Activated CD4-positive, alpha-beta memory T cell treated with anti-CD3 and anti-CD28 coated beads for 36 hours (primary cell): ENCODE measurements at regions of chr19 and their contacts with region 1.

Region 1: GRCh38 chr19:19385108-19385899 is 20.2 kb upstream of the GATAD2A start:
- DNase-seq: peak; percentile 100
- H3K4me3 Mint-ChIP-seq: peak overlapping the region; percentile 80
- H3K27ac Mint-ChIP-seq: peak overlapping the region; percentile 85
- H3K4me1 Mint-ChIP-seq: peaks cover 35% of the 10 kb centered on the region
- H3K27me3 Mint-ChIP-seq: no peaks in the 10 kb centered on the region

Region 2: DNA sequence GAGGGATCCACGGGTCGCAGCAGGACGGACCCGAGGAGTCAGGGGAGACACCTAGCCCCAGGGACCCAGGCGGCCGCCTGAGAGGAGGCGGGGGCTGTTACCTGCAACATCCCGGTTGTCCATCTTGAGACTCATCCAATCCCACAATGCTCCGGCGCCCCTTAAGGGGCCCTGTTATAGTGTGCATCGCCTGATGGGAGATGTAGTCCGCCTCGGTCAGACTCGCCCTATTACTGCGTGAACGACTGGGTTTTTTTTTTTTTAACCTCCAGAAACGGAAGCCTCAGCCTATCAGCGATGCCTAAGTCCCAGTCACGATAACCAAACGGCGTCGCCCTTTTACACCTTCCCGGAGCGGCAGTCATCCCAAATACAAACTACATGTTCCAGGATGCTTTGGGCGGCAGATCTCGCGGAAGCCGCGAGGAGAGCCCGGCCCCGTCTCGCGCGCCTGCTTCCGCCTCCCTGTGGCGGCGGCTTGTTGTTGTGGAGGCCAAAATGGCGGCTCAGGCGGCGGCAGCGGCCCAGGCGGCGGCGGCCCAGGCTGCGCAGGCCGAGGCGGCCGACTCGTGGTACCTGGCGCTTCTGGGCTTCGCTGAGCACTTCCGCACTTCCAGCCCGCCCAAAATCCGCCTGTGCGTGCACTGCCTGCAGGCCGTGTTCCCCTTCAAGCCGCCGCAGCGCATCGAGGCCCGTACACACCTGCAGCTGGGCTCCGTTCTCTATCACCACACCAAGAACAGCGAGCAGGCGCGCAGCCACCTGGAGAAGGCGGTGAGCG is 64.8 kb before region 1 on chr19 and contains the starts of genes MAU2 and SUGP1:
- CTCF ChIA-PET with region 1: interaction called, 3 read pairs
- POLR2A ChIA-PET with region 1: interaction called, 3 read pairs
- intact Hi-C with region 1: loop called (anchors 1 kb)
- DNase-seq: peak; percentile 94
- H3K4me3 Mint-ChIP-seq: peak within 1 kb of the TSS; percentile 94
- H3K27ac Mint-ChIP-seq: peak within 1 kb of the TSS; percentile 96
- H3K4me1 Mint-ChIP-seq: peaks cover 35% of the 10 kb centered on the region
- H3K27me3 Mint-ChIP-seq: no peaks in the 10 kb centered on the region
- total RNA-seq, gene MAU2: 38.6 to 40.9 TPM
- total RNA-seq, gene SUGP1: 39.2 to 44.0 TPM

Region 3: DNA sequence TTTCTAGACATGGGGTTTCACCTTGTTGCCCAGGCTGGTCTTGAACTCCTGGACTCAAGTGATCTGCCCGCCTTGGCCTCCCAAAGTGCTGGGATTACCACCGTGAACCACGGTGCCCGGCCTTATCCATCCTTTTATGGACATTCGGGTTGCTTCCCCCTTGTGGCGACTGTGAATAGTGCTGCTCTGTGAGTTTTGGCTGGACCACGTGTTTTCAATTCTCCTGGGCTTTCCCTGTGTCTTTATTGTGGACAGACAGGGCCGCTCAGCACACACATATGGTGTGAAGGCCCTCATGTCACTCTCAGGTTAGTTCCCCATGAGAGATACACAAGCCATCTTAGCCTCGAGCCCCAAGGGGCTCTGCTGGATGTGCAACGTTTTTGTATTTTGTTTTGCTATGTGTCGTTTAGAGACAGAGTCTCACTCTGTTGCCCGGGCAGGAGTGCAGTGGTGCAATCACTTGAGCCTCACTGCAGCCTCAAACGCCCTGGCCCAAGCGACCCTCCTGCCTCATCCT is 24.2 kb before region 1 on chr19:
- CTCF ChIA-PET with region 1: interaction called, 6 read pairs
- POLR2A ChIA-PET with region 1: interaction called, 6 read pairs
- intact Hi-C with region 1: loop called (anchors 1 kb)
- DNase-seq: peak; percentile 88
- H3K4me3 Mint-ChIP-seq: no peak overlapping the region
- H3K27ac Mint-ChIP-seq: no peak overlapping the region
- H3K4me1 Mint-ChIP-seq: peaks cover 29% of the 10 kb centered on the region
- H3K27me3 Mint-ChIP-seq: no peaks in the 10 kb centered on the region